Posterior cingulate gyrus (tissue), 11 donors: ENCODE measurements at regions of chr11 and their contacts with region 1.

Region 1: GRCh38 chr11:107619926-107620325 is 29.0 kb downstream of the ELMOD1 start:
- DNase-seq: no peak

Region 2: GRCh38 chr11:107526197-107526596 is 93.7 kb before region 1 on chr11:
- intact Hi-C with region 1: no loop called
- DNase-seq: no peak

Region 3: GRCh38 chr11:107631931-107632330 is 12.0 kb after region 1 on chr11:
- intact Hi-C with region 1: loop called (anchors 1 kb)
- DNase-seq: no peak

Region 4: GRCh38 chr11:107689317-107690202 is 69.6 kb after region 1 on chr11:
- intact Hi-C with region 1: no loop called
- DNase-seq: peak; percentile 27 to 94 (median 70)